Naive thymus-derived CD4-positive, alpha-beta T cell (primary cell): ENCODE measurements at regions of chr9 and their contacts with region 1.

Region 1: DNA sequence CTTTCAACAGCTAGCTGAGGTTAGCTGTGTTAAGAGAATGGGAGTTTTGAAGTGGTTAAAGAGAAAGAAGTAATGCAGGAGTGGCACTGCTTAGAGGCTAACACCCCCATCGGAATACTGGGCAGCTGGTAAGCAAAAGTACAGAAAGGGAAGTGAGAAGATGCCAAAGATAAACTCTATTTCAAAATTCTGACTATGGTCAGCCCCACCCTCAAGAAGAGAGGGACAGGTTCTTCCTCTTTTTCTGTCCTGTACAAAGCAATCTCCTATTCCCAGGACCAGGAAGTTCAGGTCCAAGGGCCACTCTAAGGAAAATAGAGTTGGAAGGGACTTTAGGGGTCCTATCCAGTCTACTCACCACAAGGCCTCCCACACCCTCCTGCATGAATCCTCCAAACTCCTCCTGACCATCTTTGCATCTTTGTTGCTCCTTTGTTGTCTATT is 45.9 kb upstream of the JAK2 start:
- DNase-seq: peak in 2 of 9 donors; percentile 2 to 24
- ATAC-seq: peak; percentile 88
- H3K4me3 ChIP-seq: no peak overlapping the region
- H3K4me3 Mint-ChIP-seq: peak overlapping the region in 7 of 10 donors; percentile 2 to 56 (median 29)
- H3K27ac ChIP-seq: no peak overlapping the region
- H3K27ac Mint-ChIP-seq: peak overlapping the region in 4 of 9 donors; percentile 7 to 80 (median 24)
- H3K4me1 ChIP-seq: peaks cover 16 to 21% of the 10 kb centered on the region in 2 donors
- H3K4me1 Mint-ChIP-seq: peaks cover 30 to 66% (median 38%) of the 10 kb centered on the region in 7 donors
- H3K27me3 ChIP-seq: no peaks in the 10 kb centered on the region
- H3K27me3 Mint-ChIP-seq: no peaks in the 10 kb centered on the region

Region 2: GRCh38 chr9:4886698-4887097 is 52.4 kb before region 1 on chr9:
- CTCF ChIA-PET with region 1: no interaction called
- POLR2A ChIA-PET with region 1: no interaction called
- intact Hi-C with region 1: no loop called
- DNase-seq: no peak
- ATAC-seq: no peak
- H3K4me3 ChIP-seq: no peak overlapping the region
- H3K4me3 Mint-ChIP-seq: no peak overlapping the region
- H3K27ac ChIP-seq: no peak overlapping the region
- H3K27ac Mint-ChIP-seq: no peak overlapping the region
- H3K4me1 ChIP-seq: no peaks in the 10 kb centered on the region
- H3K4me1 Mint-ChIP-seq: peaks cover 0 to 6% (median 0%) of the 10 kb centered on the region in 7 donors
- H3K27me3 ChIP-seq: no peaks in the 10 kb centered on the region
- H3K27me3 Mint-ChIP-seq: no peaks in the 10 kb centered on the region

Region 3: GRCh38 chr9:4970970-4971641 is 32.0 kb after region 1 on chr9:
- CTCF ChIA-PET with region 1: no interaction called
- POLR2A ChIA-PET with region 1: no interaction called
- intact Hi-C with region 1: loop called in 1 of 2 experiments (anchors 1 kb)
- DNase-seq: peak in 2 of 9 donors; percentile 11 to 58
- ATAC-seq: peak; percentile 75
- H3K4me3 ChIP-seq: no peak overlapping the region
- H3K4me3 Mint-ChIP-seq: no peak overlapping the region
- H3K27ac ChIP-seq: no peak overlapping the region
- H3K27ac Mint-ChIP-seq: no peak overlapping the region
- H3K4me1 ChIP-seq: peaks cover 0 to 11% of the 10 kb centered on the region in 2 donors
- H3K4me1 Mint-ChIP-seq: peaks cover 0 to 31% (median 0%) of the 10 kb centered on the region in 7 donors
- H3K27me3 ChIP-seq: no peaks in the 10 kb centered on the region
- H3K27me3 Mint-ChIP-seq: peaks cover 0 to under 1% (median 0%) of the 10 kb centered on the region in 5 donors